Dorsolateral prefrontal cortex (tissue), 120 donors: ENCODE measurements at regions of chr1 and their contacts with region 1.

Region 1: DNA sequence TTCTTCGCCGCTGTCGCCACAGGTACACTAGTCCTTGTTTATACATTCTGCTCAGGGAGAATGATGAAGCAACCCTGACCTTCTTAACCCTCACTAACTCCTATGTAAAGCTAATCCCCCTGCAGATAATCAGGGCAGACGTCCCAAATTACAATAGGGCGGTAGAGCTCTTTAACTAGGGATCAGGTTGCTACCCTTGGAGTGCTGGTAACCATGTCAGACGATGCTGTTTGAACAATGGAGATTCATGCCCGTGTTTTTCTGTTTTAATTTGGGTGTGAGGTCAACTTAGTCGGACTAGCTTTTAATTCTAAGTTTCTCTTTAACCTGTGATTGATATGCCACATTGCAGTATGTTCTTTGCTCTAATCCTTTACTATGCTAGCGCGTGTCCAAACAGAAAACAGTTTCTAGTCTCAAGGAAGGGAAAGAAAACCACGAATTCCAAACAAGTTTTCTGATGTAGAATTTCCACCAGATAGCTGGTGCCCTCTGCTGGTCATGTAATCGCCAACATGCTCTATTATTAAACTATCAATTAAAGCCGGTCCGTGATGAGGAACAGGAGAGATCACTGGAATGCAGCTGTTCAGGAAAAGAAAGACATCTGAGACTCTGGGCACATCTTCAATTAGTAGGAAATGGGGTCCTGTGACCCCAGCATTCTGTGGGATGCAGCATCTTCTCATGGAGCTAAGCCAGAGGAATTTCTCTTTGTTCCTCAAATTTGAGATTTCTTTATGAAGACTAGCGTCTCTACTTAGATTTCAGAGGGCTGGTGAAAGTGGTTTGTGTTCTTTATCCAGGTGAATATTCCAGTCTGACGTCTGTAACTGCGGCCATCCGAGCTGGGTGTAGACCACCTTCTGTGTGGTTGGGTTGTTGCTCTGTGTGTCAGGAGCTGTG is 18.3 kb upstream of the VAMP3 start:
- DNase-seq: peak in 6 of 10 donors; percentile 48 to 82 (median 67)
- H3K4me3 ChIP-seq: peak overlapping the region in 51 of 59 donors; percentile 1 to 54 (median 31)
- H3K27ac ChIP-seq: peak overlapping the region in 53 of 59 donors; percentile 1 to 84 (median 61)
- H3K27me3 ChIP-seq: no peaks in the 10 kb centered on the region
- CTCF ChIP-seq: peak; percentile 79 to 98 (median 90)

Region 2: GRCh38 chr1:7110321-7110720 is 642.4 kb before region 1 on chr1:
- intact Hi-C with region 1: no loop called
- DNase-seq: no peak
- H3K4me3 ChIP-seq: no peak overlapping the region
- H3K27ac ChIP-seq: no peak overlapping the region
- H3K27me3 ChIP-seq: no peaks in the 10 kb centered on the region
- CTCF ChIP-seq: no peak

Region 3: GRCh38 chr1:7704214-7705047 is 48.3 kb before region 1 on chr1:
- intact Hi-C with region 1: loop called (anchors 5 to 10 kb)
- DNase-seq: peak; percentile 93 to 99 (median 96)
- H3K4me3 ChIP-seq: peak overlapping the region in 58 of 59 donors; percentile 52 to 83 (median 72)
- H3K27ac ChIP-seq: peak overlapping the region in 40 of 59 donors; percentile 47 to 90 (median 84)
- H3K27me3 ChIP-seq: no peaks in the 10 kb centered on the region
- CTCF ChIP-seq: no peak

Region 4: DNA sequence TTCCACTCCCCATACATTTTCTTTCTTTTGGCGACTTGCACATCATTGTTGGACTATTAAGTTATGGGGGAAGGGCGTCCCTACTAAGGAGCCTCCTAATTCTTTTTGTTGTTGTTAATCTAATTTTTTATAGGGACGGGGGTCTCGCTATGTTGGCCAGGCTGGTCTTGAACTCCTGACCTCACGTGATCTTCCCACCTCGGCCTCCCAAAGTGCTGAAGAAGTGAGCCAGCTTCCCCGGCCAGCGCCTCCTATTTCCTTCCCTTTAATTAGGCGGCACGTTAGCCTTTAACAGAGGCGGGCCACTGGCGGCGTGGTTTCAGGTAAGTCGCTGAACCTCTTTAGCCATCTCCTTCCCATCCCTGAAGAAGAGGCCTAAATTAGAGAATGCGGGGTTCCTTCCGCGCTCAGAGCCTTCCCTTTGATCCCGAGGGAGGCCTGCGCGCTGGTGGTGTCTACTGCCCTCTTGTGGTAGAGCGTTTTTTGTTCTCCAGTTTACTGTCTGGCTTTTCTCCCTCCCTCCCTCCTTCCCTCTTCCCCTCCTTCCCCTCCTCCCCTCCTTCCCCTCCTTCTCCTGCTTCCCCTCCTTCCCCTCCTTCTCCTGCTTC is 149.8 kb after region 1 on chr1:
- intact Hi-C with region 1: loop called in 1 of 2 experiments (anchors 5 kb)
- DNase-seq: peak; percentile 28 to 74 (median 56)
- H3K4me3 ChIP-seq: peak overlapping the region in 39 of 59 donors; percentile 5 to 51 (median 35)
- H3K27ac ChIP-seq: peak overlapping the region in 1 of 59 donors; percentile 31
- H3K27me3 ChIP-seq: no peaks in the 10 kb centered on the region
- CTCF ChIP-seq: peak; percentile 34 to 80 (median 70)